ENCODE measurements at regions of chr1 and their contacts with region 1.

Region 1: GRCh38 chr1:8465692-8466091 is 147.8 kb downstream of the SLC45A1 start:
- DNase-seq: no peak

Region 2: GRCh38 chr1:8422510-8423301 is 43.0 kb before region 1 on chr1:
- intact Hi-C with region 1: loop called in 1 of 2 experiments (anchors 1 kb)
- DNase-seq: no peak

Region 3: DNA sequence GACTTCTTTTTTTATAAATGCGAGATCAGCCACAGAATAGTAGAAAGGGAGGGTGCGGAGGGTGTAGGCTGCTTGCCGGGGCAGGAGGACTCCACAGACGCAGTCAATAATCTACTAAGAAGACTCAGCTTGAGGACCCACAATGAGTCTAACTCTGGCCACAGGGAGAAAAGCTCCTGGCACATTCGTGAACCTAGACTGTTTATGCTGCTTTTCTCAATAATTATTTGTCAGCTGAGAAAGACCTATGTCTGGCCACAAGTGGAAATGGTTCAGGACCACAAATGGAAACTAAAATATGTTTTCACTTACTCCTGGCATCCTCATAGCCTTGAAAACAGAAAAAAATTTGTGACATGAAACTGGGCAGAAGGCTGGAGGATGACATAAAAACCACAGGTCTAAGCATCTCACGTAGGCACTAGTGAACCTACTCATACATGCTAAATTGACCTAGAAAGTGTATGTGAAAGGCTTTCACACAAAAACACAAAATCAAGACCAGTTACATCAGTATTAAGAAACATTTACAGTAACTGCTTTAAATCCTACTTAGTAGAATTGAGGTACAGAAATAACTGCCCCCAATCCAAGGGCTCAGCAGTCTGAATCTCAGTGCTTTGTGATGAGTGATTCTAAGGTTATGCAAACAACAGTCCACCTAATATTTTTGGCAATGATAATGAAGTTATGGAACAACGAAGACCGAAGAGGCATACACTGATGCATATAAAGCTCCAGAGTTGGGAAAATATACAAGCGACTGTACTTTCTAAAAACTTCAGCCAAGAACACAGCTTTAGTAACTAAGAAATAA is 11.7 kb after region 1 on chr1:
- intact Hi-C with region 1: no loop called
- DNase-seq: no peak

Region 4: DNA sequence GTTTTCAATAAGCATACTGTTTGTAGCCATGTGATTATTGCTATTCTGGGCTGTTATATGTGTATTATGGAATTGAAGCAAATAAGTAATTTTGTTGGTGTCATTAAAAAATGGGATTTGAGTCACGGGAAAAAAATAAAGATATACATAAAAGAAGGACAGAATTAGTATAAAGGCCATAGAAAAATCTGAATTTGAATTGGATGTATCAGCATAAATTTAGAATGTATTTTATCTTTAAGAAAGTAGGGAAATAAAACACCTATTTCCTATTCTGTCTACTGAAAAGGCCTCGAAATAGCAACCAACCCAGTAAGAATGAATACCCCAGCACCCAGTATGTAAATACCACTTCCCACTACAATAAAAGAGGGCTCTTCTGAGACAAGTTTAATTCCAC is 38.1 kb after region 1 on chr1:
- intact Hi-C with region 1: loop called in 1 of 2 experiments (anchors 1 kb)
- DNase-seq: no peak

Region 5: GRCh38 chr1:8540261-8540941 is 74.7 kb after region 1 on chr1:
- intact Hi-C with region 1: no loop called
- DNase-seq: no peak

Region 6: DNA sequence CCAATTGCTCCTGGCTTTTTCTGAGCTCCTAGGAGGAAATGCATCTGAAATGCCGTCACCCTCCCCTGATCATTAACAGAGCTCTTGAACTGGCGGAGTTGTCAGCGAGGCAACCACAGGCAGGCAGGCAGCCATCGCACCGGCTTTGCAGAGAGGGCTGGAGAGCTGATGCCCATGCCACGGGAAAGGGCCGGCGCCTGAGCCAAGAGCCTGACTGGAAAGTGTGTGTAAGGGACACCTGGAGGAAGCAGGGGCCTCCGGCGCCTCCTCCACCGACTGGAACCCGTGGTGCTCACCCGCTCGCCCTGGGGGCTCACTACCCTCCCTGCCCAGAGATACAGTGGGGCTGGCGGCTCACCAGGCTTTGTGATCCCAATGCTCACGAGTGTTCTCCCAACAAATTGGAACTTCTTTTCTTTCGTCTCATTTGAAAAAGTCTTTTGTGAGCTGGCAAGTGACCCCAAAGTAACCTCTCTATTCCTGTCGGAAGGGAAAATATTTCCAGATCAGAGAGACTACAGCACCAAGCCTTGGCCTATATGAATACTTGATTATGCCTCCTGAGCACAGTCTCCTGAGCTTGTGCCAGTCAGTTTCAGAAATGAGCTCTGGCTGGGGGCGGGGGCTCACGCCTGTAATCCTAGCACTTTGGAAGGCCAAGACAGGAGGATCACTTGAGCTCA is 975.9 kb after region 1 on chr1:
- intact Hi-C with region 1: no loop called
- DNase-seq: no peak